Caco-2 (cell line): ENCODE measurements at regions of chr7 and their contacts with region 1.

Region 1: GRCh38 chr7:114426382-114427223 is 12.0 kb downstream of the FOXP2 start:
- DNase-seq: no peak
- H3K4me3 ChIP-seq: no peak overlapping the region
- H3K4me3 Mint-ChIP-seq: no peak overlapping the region
- H3K27ac Mint-ChIP-seq: no peak overlapping the region
- H3K4me1 ChIP-seq: no peaks in the 10 kb centered on the region
- H3K4me1 Mint-ChIP-seq: no peaks in the 10 kb centered on the region
- H3K27me3 ChIP-seq: no peaks in the 10 kb centered on the region
- H3K27me3 Mint-ChIP-seq: no peaks in the 10 kb centered on the region
- CTCF ChIP-seq: peak in 1 of 2 experiments; percentile 11

Region 2: DNA sequence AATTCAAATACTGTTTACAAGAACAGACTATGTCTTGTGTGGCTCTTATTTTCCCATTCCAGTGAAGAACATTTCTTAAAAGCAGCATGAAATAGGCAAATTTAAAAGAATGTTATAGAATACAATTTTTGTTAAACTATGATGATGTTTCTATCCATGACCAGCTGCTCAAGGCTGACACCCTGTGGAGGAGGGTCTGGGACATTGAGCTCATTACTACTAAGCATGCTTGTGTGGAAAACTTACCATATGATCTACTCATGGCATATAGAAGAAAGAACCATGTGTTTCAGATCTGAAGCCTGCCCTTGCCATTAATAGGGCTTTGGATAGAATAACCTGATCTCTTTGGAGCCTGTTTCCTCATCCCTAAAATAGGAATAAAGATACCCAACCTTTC is 113.0 kb after region 1 on chr7:
- CTCF ChIA-PET with region 1: interaction called, 15 read pairs
- POLR2A ChIA-PET with region 1: no interaction called
- intact Hi-C with region 1: no loop called
- DNase-seq: peak; percentile 32 to 39
- H3K4me3 ChIP-seq: no peak overlapping the region
- H3K4me3 Mint-ChIP-seq: no peak overlapping the region
- H3K27ac Mint-ChIP-seq: no peak overlapping the region
- H3K4me1 ChIP-seq: no peaks in the 10 kb centered on the region
- H3K4me1 Mint-ChIP-seq: no peaks in the 10 kb centered on the region
- H3K27me3 ChIP-seq: no peaks in the 10 kb centered on the region
- H3K27me3 Mint-ChIP-seq: peaks cover 3% of the 10 kb centered on the region
- CTCF ChIP-seq: peak; percentile 17 to 65

Region 3: GRCh38 chr7:114663502-114663901 is 236.9 kb after region 1 on chr7:
- CTCF ChIA-PET with region 1: interaction called, 6 read pairs
- POLR2A ChIA-PET with region 1: no interaction called
- intact Hi-C with region 1: loop called (anchors 1 kb)
- DNase-seq: peak in 1 of 2 experiments; percentile 29
- H3K4me3 ChIP-seq: no peak overlapping the region
- H3K4me3 Mint-ChIP-seq: no peak overlapping the region
- H3K27ac Mint-ChIP-seq: no peak overlapping the region
- H3K4me1 ChIP-seq: no peaks in the 10 kb centered on the region
- H3K4me1 Mint-ChIP-seq: no peaks in the 10 kb centered on the region
- H3K27me3 ChIP-seq: no peaks in the 10 kb centered on the region
- H3K27me3 Mint-ChIP-seq: peaks cover 3% of the 10 kb centered on the region
- CTCF ChIP-seq: peak in 1 of 2 experiments; percentile 31